BJ (cell line): ENCODE measurements at regions of chr11 and their contacts with region 1.

Region 1: GRCh38 chr11:65685981-65686380 is 23.3 kb upstream of the RELA start:
- DNase-seq: no peak
- H3K4me3 ChIP-seq: no peak overlapping the region
- H3K27me3 ChIP-seq: peaks cover 9% of the 10 kb centered on the region
- CTCF ChIP-seq: no peak

Region 2: DNA sequence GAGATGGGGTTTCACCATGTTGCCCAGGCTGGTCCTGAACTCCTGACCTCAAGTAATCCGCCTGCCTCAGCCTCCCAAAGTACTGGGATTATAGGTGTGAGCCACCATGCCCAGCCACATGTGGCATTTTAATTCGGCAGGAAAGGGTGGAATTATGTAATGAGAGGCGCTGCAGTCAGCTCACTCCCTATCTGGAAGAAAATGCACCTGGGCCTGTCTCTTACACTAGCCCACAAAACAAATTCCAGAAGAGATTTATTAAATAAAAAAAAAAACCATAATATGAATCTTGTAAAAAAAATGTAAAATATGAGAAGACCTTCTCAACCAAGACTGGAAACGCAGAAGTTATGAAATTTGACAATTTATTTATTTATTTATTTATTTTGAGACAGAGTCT is 17.9 kb after region 1 on chr11:
- CTCF ChIA-PET with region 1: interaction called, 10 read pairs
- POLR2A ChIA-PET with region 1: no interaction called
- DNase-seq: no peak
- H3K4me3 ChIP-seq: no peak overlapping the region
- H3K27me3 ChIP-seq: peaks cover 6% of the 10 kb centered on the region
- CTCF ChIP-seq: no peak